Left ventricle myocardium inferior (tissue), 1 donor: ENCODE measurements at regions of chr18 and their contacts with region 1.

Region 1: GRCh38 chr18:48781163-48781987 is 169.4 kb downstream of the SMAD7 start:
- DNase-seq: peak; percentile 93
- H3K4me3 ChIP-seq: peak overlapping the region; percentile 42
- H3K27ac ChIP-seq: peak overlapping the region; percentile 98
- H3K4me1 ChIP-seq: peaks cover 90% of the 10 kb centered on the region
- H3K27me3 ChIP-seq: no peaks in the 10 kb centered on the region
- CTCF ChIP-seq: no peak

Region 2: DNA sequence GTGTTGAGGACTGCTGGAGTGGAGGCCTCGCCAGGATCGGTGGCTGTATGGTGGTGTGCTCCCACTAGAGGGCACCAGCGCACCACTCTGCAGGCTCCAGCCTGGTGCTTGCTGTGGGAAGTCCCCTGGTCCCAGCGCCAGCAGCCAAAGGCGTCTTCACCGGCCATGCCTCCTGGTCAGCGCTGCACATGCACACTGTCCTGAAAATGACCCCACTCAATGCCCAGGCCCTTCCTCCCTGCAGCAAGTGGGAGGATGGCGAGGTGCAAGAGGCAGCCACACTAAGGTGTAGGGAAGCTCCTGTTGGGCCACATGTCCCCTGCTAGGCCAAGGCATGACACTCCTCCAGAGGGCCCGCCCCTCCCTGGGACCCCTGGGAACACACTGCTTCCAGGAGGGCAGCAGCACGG is 106.0 kb before region 1 on chr18:
- intact Hi-C with region 1: loop called (anchors 5 kb)
- DNase-seq: peak; percentile 89
- H3K4me3 ChIP-seq: no peak overlapping the region
- H3K27ac ChIP-seq: no peak overlapping the region
- H3K4me1 ChIP-seq: peaks cover 69% of the 10 kb centered on the region
- H3K27me3 ChIP-seq: no peaks in the 10 kb centered on the region
- CTCF ChIP-seq: peak; percentile 98

Region 3: DNA sequence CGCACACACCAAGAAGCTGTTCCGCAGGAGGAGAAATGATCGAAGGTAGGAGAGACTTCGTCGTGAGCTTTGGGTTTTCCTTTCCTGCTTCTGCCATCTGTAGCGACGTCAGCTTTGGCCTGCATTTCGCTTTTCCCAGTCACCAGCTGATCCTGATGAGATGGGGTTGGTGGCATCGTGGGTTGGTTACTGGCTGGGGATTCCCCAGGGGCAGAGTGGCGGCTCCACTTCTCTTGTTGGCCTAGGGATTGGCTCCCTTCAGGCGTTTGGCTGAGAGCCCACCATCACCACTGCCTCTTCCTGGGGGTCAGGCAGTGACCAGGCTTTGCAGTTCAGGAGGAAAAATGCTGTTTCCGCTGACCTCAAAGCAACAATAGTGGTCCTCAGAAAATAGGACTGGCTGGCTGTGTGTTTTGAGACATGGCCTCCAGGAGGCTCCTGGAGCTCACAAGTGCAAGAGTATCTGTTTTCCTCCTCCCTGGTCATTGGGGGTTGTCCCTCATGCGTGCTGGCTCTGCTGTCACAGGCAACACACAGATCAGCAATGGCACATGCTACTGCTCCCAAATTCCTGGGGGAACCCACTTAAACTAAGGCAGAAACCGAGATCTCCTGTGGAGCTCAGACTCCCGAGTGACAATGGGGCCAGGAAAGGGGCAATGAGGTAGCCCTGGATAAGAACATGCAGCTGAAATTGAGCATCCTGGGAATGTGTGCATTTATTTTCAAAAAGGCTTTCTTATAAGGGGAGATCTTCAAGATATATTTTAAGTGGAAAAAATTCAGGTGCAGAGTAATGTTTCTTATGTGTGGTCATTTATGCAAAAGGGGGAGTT is 69.5 kb before region 1 on chr18:
- intact Hi-C with region 1: loop called (anchors 2 kb)
- DNase-seq: no peak
- H3K4me3 ChIP-seq: no peak overlapping the region
- H3K27ac ChIP-seq: peak overlapping the region; percentile 82
- H3K4me1 ChIP-seq: peaks cover 79% of the 10 kb centered on the region
- H3K27me3 ChIP-seq: no peaks in the 10 kb centered on the region
- CTCF ChIP-seq: peak; percentile 71

Region 4: GRCh38 chr18:48949606-48950470 is 168.5 kb after region 1 on chr18:
- intact Hi-C with region 1: loop called (anchors 10 kb)
- DNase-seq: no peak
- H3K4me3 ChIP-seq: peak overlapping the region; percentile 94
- H3K27ac ChIP-seq: peak overlapping the region; percentile 100
- H3K4me1 ChIP-seq: peaks cover 84% of the 10 kb centered on the region
- H3K27me3 ChIP-seq: no peaks in the 10 kb centered on the region
- CTCF ChIP-seq: peak; percentile 49

Region 5: DNA sequence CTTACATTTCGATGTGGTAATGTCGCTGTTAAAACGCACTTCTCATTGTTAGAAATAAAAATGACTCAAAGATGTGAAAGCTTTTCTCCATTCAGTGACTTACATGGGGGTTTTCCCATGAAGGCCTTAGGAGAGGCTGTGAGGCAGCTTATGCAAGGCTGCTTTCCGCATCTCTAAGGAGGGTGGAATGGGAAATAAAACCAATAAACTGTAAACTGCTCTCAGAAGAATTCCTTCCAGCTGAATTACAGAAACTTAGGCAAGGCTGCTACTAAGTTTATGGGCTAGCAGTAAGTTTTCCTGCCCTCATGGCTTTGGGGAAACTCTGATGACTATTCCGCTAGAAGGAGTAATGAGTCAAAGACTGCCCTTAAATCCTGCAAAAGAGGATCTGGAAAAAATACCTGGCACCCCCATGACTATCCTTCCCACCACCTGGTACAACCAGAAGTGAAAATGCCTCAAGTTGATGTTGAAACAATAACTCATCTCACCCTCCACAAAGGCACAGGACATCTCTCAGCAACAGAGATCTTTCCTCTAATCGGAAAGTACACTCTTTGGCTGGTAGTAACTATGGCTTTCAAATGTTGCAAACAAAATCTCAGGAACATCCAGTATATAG is 267.1 kb after region 1 on chr18:
- intact Hi-C with region 1: no loop called
- DNase-seq: no peak
- H3K4me3 ChIP-seq: no peak overlapping the region
- H3K27ac ChIP-seq: no peak overlapping the region
- H3K4me1 ChIP-seq: peaks cover 20% of the 10 kb centered on the region
- H3K27me3 ChIP-seq: no peaks in the 10 kb centered on the region
- CTCF ChIP-seq: no peak

Region 6: GRCh38 chr18:49206717-49207116 is 425.3 kb after region 1 on chr18:
- intact Hi-C with region 1: no loop called
- DNase-seq: no peak
- H3K4me3 ChIP-seq: no peak overlapping the region
- H3K27ac ChIP-seq: no peak overlapping the region
- H3K4me1 ChIP-seq: peaks cover 11% of the 10 kb centered on the region
- H3K27me3 ChIP-seq: no peaks in the 10 kb centered on the region
- CTCF ChIP-seq: no peak